Naive thymus-derived CD4-positive, alpha-beta T cell (primary cell): ENCODE measurements at regions of chr10 and their contacts with region 1.

Region 1: GRCh38 chr10:94362360-94363250 is at the start of gene NOC3L:
- DNase-seq: peak; percentile 85 to 96 (median 91)
- ATAC-seq: peak; percentile 97
- H3K4me3 ChIP-seq: peak within 1 kb of the TSS; percentile 76
- H3K4me3 Mint-ChIP-seq: peak within 1 kb of the TSS; percentile 93 to 98 (median 96)
- H3K27ac ChIP-seq: peak within 1 kb of the TSS; percentile 92
- H3K27ac Mint-ChIP-seq: peak within 1 kb of the TSS; percentile 90 to 99 (median 97)
- H3K4me1 ChIP-seq: peaks cover 13 to 18% of the 10 kb centered on the region in 2 donors
- H3K4me1 Mint-ChIP-seq: peaks cover 20 to 54% (median 42%) of the 10 kb centered on the region in 7 donors
- H3K27me3 ChIP-seq: no peaks in the 10 kb centered on the region
- H3K27me3 Mint-ChIP-seq: peaks cover 0 to 14% (median 9%) of the 10 kb centered on the region in 5 donors
- total RNA-seq, gene NOC3L: 8.6 to 28.8 (median 24.8) TPM

Region 2: GRCh38 chr10:93235686-93236085 is 1126.9 kb before region 1 on chr10:
- CTCF ChIA-PET with region 1: no interaction called
- POLR2A ChIA-PET with region 1: no interaction called
- intact Hi-C with region 1: no loop called
- DNase-seq: no peak
- ATAC-seq: no peak
- H3K4me3 ChIP-seq: no peak overlapping the region
- H3K4me3 Mint-ChIP-seq: no peak overlapping the region
- H3K27ac ChIP-seq: no peak overlapping the region
- H3K27ac Mint-ChIP-seq: no peak overlapping the region
- H3K4me1 ChIP-seq: no peaks in the 10 kb centered on the region
- H3K4me1 Mint-ChIP-seq: no peaks in the 10 kb centered on the region
- H3K27me3 ChIP-seq: no peaks in the 10 kb centered on the region
- H3K27me3 Mint-ChIP-seq: peaks cover 5 to 12% (median 6%) of the 10 kb centered on the region in 5 donors

Region 3: GRCh38 chr10:93916257-93917063 is 446.1 kb before region 1 on chr10:
- CTCF ChIA-PET with region 1: no interaction called
- POLR2A ChIA-PET with region 1: no interaction called
- intact Hi-C with region 1: no loop called
- DNase-seq: no peak
- ATAC-seq: no peak
- H3K4me3 ChIP-seq: no peak overlapping the region
- H3K4me3 Mint-ChIP-seq: peak overlapping the region in 3 of 10 donors; percentile 15 to 42 (median 40)
- H3K27ac ChIP-seq: no peak overlapping the region
- H3K27ac Mint-ChIP-seq: peak overlapping the region in 1 of 9 donors; percentile 67
- H3K4me1 ChIP-seq: no peaks in the 10 kb centered on the region
- H3K4me1 Mint-ChIP-seq: peaks cover 0 to 7% (median 2%) of the 10 kb centered on the region in 7 donors
- H3K27me3 ChIP-seq: no peaks in the 10 kb centered on the region
- H3K27me3 Mint-ChIP-seq: no peaks in the 10 kb centered on the region

Region 4: DNA sequence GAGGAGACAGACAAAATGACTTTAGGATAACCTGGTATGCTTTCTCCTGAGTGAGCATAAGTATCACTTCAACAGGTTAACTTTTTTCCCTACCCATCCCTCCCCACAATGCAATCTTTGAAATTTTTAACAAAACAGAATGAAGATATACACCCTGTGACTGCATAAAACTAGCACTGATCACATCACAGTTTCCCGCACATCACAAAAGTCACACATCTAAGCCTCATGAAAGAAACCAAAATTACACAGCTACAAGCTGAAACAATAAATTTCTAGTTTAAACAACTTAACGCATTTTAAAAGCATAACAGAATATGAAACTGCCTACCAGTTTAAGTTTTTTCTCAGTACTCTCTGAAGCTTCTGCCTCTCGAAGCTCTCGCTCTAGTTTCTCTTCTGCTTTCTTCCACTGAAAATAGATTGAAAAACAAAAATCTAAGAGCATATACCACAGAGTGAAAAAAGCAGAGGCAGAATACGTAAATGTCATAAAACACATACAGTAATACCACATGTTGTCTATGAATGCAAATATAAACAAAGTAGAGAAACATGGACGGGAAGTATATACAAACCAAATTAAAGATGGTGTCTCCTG is 18.0 kb before region 1 on chr10:
- CTCF ChIA-PET with region 1: no interaction called
- POLR2A ChIA-PET with region 1: no interaction called
- intact Hi-C with region 1: loop called in 1 of 2 experiments (anchors 2 kb)
- DNase-seq: no peak
- ATAC-seq: peak; percentile 24
- H3K4me3 ChIP-seq: no peak overlapping the region
- H3K4me3 Mint-ChIP-seq: no peak overlapping the region
- H3K27ac ChIP-seq: no peak overlapping the region
- H3K27ac Mint-ChIP-seq: peak overlapping the region in 1 of 9 donors; percentile 38
- H3K4me1 ChIP-seq: no peaks in the 10 kb centered on the region
- H3K4me1 Mint-ChIP-seq: peaks cover 0 to 11% (median 0%) of the 10 kb centered on the region in 7 donors
- H3K27me3 ChIP-seq: no peaks in the 10 kb centered on the region
- H3K27me3 Mint-ChIP-seq: no peaks in the 10 kb centered on the region

Region 5: DNA sequence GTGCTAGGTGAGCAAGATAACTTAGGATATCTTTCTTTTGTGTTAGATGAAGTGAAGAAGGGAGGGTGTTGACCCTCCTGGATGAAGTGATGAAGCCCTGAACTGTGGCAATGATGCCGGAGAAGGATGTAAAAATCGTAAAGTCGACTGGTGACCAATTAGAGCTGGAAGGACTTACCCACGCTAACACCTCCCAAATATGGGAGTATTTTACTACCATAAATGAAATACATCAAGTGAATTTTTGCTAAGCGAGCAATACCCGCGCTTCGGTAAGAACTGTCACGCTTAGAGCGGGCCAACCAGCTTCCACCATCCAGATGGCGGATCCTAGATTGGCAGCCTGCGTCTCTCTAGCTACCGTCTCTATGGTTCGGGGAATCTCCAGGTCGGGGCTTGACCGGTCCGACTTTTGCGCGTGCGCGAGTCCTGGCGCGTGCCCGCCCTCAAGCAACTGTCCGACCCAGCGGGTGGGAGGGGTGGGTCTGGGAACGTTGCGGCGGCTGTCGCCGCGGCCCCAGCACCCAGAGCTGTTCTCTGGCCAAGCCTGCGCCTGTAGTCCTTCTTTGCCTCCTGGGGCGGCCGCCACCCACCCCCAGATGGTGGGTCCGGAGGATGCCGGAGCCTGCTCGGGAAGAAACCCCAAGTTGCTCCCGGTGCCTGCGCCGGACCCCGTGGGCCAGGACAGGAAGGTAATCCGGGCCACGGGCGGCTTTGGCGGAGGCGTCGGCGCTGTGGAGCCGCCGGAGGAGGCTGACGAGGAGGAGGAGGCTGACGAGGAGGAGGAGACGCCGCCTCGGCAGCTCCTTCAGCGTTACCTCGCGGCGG is 39.6 kb after region 1 on chr10 and contains the start of gene TBC1D12:
- CTCF ChIA-PET with region 1: no interaction called
- POLR2A ChIA-PET with region 1: no interaction called
- intact Hi-C with region 1: loop called in 1 of 2 experiments (anchors 5 kb)
- DNase-seq: peak in 5 of 9 donors; percentile 7 to 44 (median 20)
- ATAC-seq: peak; percentile 67
- H3K4me3 ChIP-seq: peak within 1 kb of the TSS; percentile 43
- H3K4me3 Mint-ChIP-seq: peak within 1 kb of the TSS; percentile 54 to 90 (median 82)
- H3K27ac ChIP-seq: no peak within 1 kb of the TSS
- H3K27ac Mint-ChIP-seq: no peak within 1 kb of the TSS
- H3K4me1 ChIP-seq: no peaks in the 10 kb centered on the region
- H3K4me1 Mint-ChIP-seq: peaks cover 0 to 12% (median 9%) of the 10 kb centered on the region in 7 donors
- H3K27me3 ChIP-seq: peaks cover 4 to 19% of the 10 kb centered on the region in 2 donors
- H3K27me3 Mint-ChIP-seq: peaks cover 48 to 78% (median 74%) of the 10 kb centered on the region in 5 donors
- total RNA-seq, gene TBC1D12: 0.22 to 3.6 (median 0.60) TPM